MCF 10A (cell line): ENCODE measurements at regions of chr5 and their contacts with region 1.

Region 1: GRCh38 chr5:143200781-143201398 is 202.6 kb downstream of the NR3C1 start:
- DNase-seq: peak; percentile 97
- H3K4me3 Mint-ChIP-seq: peak overlapping the region; percentile 15
- H3K27ac Mint-ChIP-seq: peak overlapping the region; percentile 84
- H3K4me1 Mint-ChIP-seq: peaks cover 45% of the 10 kb centered on the region
- H3K27me3 Mint-ChIP-seq: no peaks in the 10 kb centered on the region
- CTCF ChIP-seq: no peak

Region 2: GRCh38 chr5:142492781-142493281 is 708.1 kb before region 1 on chr5:
- CTCF ChIA-PET with region 1: no interaction called
- POLR2A ChIA-PET with region 1: no interaction called
- intact Hi-C with region 1: no loop called
- DNase-seq: no peak
- H3K4me3 Mint-ChIP-seq: no peak overlapping the region
- H3K27ac Mint-ChIP-seq: no peak overlapping the region
- H3K4me1 Mint-ChIP-seq: no peaks in the 10 kb centered on the region
- H3K27me3 Mint-ChIP-seq: no peaks in the 10 kb centered on the region
- CTCF ChIP-seq: no peak

Region 3: GRCh38 chr5:142994218-142994617 is 206.7 kb before region 1 on chr5:
- CTCF ChIA-PET with region 1: no interaction called
- POLR2A ChIA-PET with region 1: no interaction called
- intact Hi-C with region 1: no loop called
- DNase-seq: no peak
- H3K4me3 Mint-ChIP-seq: no peak overlapping the region
- H3K27ac Mint-ChIP-seq: no peak overlapping the region
- H3K4me1 Mint-ChIP-seq: no peaks in the 10 kb centered on the region
- H3K27me3 Mint-ChIP-seq: no peaks in the 10 kb centered on the region
- CTCF ChIP-seq: no peak

Region 4: GRCh38 chr5:143106174-143106573 is 94.7 kb before region 1 on chr5:
- CTCF ChIA-PET with region 1: no interaction called
- POLR2A ChIA-PET with region 1: interaction called, 4 read pairs
- intact Hi-C with region 1: loop called (anchors 2 kb)
- DNase-seq: peak; percentile 79
- H3K4me3 Mint-ChIP-seq: no peak overlapping the region
- H3K27ac Mint-ChIP-seq: no peak overlapping the region
- H3K4me1 Mint-ChIP-seq: peaks cover 5% of the 10 kb centered on the region
- H3K27me3 Mint-ChIP-seq: no peaks in the 10 kb centered on the region
- CTCF ChIP-seq: peak; percentile 33

Region 5: DNA sequence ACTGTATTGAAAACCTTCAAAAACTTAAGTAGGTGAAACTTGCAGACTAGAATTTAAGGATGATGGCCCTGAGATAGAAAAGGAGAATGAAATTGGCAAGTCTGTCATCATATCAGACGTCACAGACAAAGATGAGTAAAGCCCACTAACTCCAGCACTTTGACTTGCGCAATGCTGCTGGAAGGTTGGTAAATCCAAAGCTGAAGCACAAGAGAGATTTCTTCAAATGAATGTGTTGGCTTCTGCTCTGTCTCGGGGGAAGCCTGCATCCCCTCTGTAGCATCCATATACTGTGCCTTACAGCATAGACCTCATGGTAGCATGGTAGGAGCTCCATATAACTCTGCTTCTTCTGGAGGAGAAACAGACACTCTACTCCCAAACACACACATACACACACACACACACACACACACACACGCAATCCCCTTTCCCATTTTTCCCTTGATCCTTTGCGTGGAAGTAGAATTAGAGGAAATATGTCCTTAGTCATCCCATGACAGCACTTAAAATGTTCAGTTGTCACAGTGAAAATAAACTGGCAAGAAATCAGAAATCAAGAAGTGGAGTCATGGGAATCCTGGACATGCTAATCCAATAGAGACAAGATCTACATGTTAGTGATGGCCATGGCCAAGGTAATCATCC is 38.9 kb before region 1 on chr5:
- CTCF ChIA-PET with region 1: interaction called, 4 read pairs
- POLR2A ChIA-PET with region 1: interaction called, 12 read pairs
- intact Hi-C with region 1: no loop called
- DNase-seq: peak; percentile 96
- H3K4me3 Mint-ChIP-seq: no peak overlapping the region
- H3K27ac Mint-ChIP-seq: peak overlapping the region; percentile 25
- H3K4me1 Mint-ChIP-seq: peaks cover 38% of the 10 kb centered on the region
- H3K27me3 Mint-ChIP-seq: no peaks in the 10 kb centered on the region
- CTCF ChIP-seq: no peak

Region 6: DNA sequence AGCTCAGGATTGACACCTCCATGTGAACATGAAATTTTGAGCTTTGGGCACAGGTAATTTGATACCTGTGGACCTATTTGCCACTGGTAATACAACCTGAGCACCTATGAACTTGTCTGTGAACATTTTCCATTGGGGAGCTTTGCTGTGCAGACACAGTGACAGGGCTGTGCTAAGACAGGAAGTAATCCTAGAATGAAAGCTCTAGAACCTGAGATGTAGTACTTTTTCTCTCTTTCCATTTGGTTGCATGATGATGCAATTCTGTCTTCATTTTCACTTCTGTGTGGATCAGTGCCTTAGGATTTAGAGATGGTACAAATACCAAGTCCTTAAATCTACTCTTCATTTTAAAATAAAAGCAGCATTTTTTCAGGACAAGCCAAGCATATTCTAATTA is 14.3 kb before region 1 on chr5:
- CTCF ChIA-PET with region 1: interaction called, 3 read pairs
- POLR2A ChIA-PET with region 1: interaction called, 15 read pairs
- intact Hi-C with region 1: no loop called
- DNase-seq: no peak
- H3K4me3 Mint-ChIP-seq: no peak overlapping the region
- H3K27ac Mint-ChIP-seq: no peak overlapping the region
- H3K4me1 Mint-ChIP-seq: peaks cover 16% of the 10 kb centered on the region
- H3K27me3 Mint-ChIP-seq: no peaks in the 10 kb centered on the region
- CTCF ChIP-seq: no peak

Region 7: GRCh38 chr5:143244000-143244736 is 43.3 kb after region 1 on chr5:
- CTCF ChIA-PET with region 1: interaction called, 5 read pairs
- POLR2A ChIA-PET with region 1: interaction called, 54 read pairs
- intact Hi-C with region 1: loop called (anchors 1 kb)
- DNase-seq: peak; percentile 98
- H3K4me3 Mint-ChIP-seq: peak overlapping the region; percentile 54
- H3K27ac Mint-ChIP-seq: peak overlapping the region; percentile 84
- H3K4me1 Mint-ChIP-seq: peaks cover 61% of the 10 kb centered on the region
- H3K27me3 Mint-ChIP-seq: no peaks in the 10 kb centered on the region
- CTCF ChIP-seq: no peak

Region 8: DNA sequence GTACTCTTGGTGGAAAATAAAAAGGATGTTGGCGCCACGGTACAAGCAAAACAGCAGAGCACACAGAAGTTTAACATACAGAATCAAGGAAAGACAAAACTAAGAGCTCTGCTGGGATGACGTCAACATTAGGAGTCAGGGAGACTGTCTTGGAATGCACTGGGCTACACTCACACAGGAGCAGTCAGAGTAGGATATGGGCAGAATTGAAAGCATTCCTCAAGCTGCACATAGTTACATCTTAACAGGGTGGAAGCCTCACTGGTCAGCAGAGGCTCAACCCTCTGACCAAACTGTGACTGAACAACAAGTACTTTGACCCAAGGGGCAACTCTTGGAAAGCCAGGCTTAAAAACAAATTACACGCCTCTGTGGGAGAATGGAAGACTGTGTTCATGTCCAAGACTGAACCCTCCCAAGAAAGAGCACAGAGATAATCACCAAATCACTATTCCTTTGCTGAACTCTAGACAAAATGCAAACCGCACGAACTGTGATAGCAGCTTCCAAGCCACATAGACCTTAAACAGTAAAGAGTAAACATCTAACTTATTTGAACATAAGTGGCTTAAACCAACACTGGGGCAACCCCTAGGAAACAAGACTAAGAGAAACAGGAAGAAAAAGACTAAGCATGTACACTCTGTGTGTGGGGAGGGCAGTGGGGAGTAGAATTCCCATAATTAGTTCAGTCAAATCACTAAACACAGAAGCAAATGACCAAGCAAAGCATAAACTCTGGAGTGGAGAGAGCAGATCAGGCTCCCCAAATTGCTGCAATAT is 1861.6 kb after region 1 on chr5:
- CTCF ChIA-PET with region 1: no interaction called
- POLR2A ChIA-PET with region 1: no interaction called
- intact Hi-C with region 1: no loop called
- DNase-seq: no peak
- H3K4me3 Mint-ChIP-seq: no peak overlapping the region
- H3K27ac Mint-ChIP-seq: no peak overlapping the region
- H3K4me1 Mint-ChIP-seq: no peaks in the 10 kb centered on the region
- H3K27me3 Mint-ChIP-seq: no peaks in the 10 kb centered on the region
- CTCF ChIP-seq: no peak